ENCODE measurements at regions of chr11 and their contacts with region 1.

Region 1: GRCh38 chr11:65900125-65900898 is at the start of gene FOSL1:
- DNase-seq: peak; percentile 97
- ATAC-seq: peak; percentile 79
- H3K4me3 ChIP-seq: peak within 1 kb of the TSS; percentile 90 to 98
- H3K27ac ChIP-seq: peak within 1 kb of the TSS; percentile 99
- H3K4me1 ChIP-seq: peaks cover 51 to 85% of the 10 kb centered on the region in 2 experiments
- H3K27me3 ChIP-seq: no peaks in the 10 kb centered on the region
- CTCF ChIP-seq: no peak
- POLR2A ChIP-seq: peak; percentile 97
- RAD21 ChIP-seq: no peak
- total RNA-seq, gene FOSL1: 125 TPM

Region 2: DNA sequence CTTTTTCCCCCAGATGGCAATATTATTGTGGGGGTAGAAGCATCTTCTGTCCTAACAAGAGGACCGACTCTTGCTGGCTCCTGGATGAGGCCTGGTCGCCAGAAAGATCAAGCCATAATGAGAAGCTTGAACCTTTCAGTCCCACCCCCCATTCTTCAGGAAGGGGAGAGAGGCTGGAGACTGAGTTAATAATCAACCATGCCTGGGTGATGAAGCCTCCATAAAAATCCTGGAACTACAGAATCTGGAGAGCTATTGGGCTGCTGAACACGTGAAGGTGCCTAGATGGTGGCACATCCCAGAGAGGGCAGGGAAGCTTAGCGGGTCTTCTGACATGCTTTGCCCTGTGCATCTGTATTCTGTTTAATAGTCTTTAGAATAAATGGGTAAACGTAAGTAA is 135.9 kb before region 1 on chr11:
- CTCF ChIA-PET with region 1: no interaction called
- POLR2A ChIA-PET with region 1: no interaction called
- RAD21 ChIA-PET with region 1: no interaction called
- intact Hi-C with region 1: no loop called
- DNase-seq: no peak
- ATAC-seq: no peak
- H3K4me3 ChIP-seq: no peak overlapping the region
- H3K27ac ChIP-seq: no peak overlapping the region
- H3K4me1 ChIP-seq: peaks cover 2 to 14% of the 10 kb centered on the region in 2 experiments; a peak in 2 of 4 replicates
- H3K27me3 ChIP-seq: no peaks in the 10 kb centered on the region
- CTCF ChIP-seq: no peak
- POLR2A ChIP-seq: no peak
- RAD21 ChIP-seq: no peak

Region 3: DNA sequence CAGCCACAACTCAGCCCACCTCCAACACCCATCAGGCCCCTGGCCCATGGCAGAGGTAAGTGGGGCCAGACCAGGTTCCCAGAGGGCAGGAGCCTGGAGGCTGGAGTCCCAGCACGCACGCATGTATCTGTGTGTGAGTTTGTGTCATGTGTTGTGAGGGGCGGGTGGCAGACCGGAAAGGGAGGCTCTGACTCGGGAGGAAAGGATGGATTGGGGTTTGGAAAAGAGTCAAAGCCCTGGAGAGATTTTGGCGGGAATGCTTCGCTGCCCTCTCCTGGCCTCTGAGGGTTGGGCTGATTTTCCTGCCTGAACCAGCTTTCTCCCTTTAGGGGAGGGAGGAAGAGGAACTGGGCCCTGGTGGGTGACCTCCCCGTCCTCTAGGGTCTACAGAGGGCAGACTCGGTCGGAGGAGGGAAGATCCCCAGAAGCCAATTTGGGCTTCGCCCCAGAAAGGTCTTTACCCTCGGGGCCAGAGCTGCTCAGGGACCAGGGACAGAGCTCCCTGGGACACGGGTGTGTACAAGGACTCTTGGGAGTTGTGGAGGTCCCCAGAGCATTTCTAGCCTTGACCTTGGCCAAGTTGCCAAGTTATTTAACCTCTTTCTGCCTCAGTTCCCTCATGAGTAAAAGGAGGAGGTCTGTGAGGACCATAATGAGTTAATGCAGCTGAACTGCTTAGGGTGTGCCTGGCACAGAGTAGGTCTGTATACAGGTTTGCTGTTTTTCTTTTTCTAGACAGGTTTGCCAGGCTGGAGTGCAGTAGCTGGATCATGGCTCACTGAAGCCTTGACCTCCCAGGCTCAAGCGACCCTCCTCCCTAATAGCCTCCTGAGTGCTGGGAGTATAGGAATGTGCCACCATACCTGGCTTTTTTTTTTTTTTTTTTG is 11.6 kb after region 1 on chr11:
- CTCF ChIA-PET with region 1: interaction called, 3 read pairs
- POLR2A ChIA-PET with region 1: interaction called, 80 read pairs
- RAD21 ChIA-PET with region 1: no interaction called
- intact Hi-C with region 1: loop called (anchors 1 kb)
- DNase-seq: peak; percentile 72
- ATAC-seq: peak; percentile 28
- H3K4me3 ChIP-seq: peak overlapping the region; percentile 7 to 25; a peak in 2 of 4 replicates
- H3K27ac ChIP-seq: peak overlapping the region; percentile 75
- H3K4me1 ChIP-seq: peaks cover 59 to 97% of the 10 kb centered on the region in 2 experiments
- H3K27me3 ChIP-seq: no peaks in the 10 kb centered on the region
- CTCF ChIP-seq: peak in 2 of 3 experiments; percentile 40 to 44; a peak in 4 of 6 replicates
- POLR2A ChIP-seq: peak; percentile 52
- RAD21 ChIP-seq: no peak